ENCODE measurements at regions of chr2 and their contacts with region 1.

Region 1: DNA sequence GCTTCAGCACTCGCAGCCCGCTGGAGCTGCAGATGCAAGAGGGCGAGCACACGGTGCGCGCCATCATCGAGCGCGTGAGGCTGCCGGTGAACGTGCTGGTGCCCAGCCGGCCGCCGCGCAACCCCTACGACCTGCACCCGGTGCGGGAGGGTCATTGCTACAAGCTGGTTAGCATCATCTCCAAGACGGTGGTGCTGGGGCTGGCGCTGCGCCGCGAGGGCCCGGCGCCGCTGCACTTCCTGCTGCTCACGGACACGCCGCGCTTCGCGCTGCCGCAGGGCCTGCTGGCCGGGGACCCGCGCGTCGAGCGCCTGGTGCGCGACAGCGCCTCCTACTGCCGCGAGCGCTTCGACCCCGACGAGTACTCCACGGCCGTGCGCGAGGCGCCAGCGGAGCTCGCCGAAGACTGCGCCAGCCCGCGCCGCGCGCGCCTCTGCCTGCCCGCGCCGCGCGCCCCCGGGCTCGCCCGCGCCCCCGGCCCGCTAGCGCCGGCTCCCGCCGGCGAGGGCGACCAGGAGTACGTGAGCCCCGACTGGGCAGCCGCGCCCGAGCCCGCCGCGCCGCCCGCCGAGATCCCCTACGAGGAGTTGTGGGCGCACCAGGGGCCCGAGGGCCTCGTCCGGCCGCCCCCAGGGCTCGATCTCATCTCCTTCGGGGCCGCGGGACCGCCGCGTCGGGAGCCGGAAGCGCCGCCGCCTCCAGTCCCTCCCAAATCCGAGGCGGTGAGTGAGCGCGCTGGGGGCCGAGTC is 11.8 kb downstream of the GAREM2 start:
- DNase-seq: peak; percentile 76 to 95 (median 87)
- ATAC-seq: peak; percentile 98
- H3K4me3 ChIP-seq: peak overlapping the region; percentile 61 to 76
- H3K4me3 Mint-ChIP-seq: peak overlapping the region; percentile 88
- H3K27ac ChIP-seq: peak overlapping the region; percentile 39 to 50
- H3K27ac Mint-ChIP-seq: no peak overlapping the region
- H3K4me1 ChIP-seq: peaks cover 9% of the 10 kb centered on the region
- H3K4me1 Mint-ChIP-seq: peaks cover 23% of the 10 kb centered on the region
- H3K27me3 ChIP-seq: no peaks in the 10 kb centered on the region
- H3K27me3 Mint-ChIP-seq: peaks cover 11% of the 10 kb centered on the region
- CTCF ChIP-seq: peak; percentile 70

Region 2: GRCh38 chr2:24871852-24872323 is 1312.8 kb before region 1 on chr2:
- CTCF ChIA-PET with region 1: no interaction called
- POLR2A ChIA-PET with region 1: no interaction called
- intact Hi-C with region 1: no loop called
- DNase-seq: no peak
- ATAC-seq: no peak
- H3K4me3 ChIP-seq: no peak overlapping the region
- H3K4me3 Mint-ChIP-seq: no peak overlapping the region
- H3K27ac ChIP-seq: no peak overlapping the region
- H3K27ac Mint-ChIP-seq: no peak overlapping the region
- H3K4me1 ChIP-seq: no peaks in the 10 kb centered on the region
- H3K4me1 Mint-ChIP-seq: no peaks in the 10 kb centered on the region
- H3K27me3 ChIP-seq: no peaks in the 10 kb centered on the region
- H3K27me3 Mint-ChIP-seq: no peaks in the 10 kb centered on the region
- CTCF ChIP-seq: no peak

Region 3: DNA sequence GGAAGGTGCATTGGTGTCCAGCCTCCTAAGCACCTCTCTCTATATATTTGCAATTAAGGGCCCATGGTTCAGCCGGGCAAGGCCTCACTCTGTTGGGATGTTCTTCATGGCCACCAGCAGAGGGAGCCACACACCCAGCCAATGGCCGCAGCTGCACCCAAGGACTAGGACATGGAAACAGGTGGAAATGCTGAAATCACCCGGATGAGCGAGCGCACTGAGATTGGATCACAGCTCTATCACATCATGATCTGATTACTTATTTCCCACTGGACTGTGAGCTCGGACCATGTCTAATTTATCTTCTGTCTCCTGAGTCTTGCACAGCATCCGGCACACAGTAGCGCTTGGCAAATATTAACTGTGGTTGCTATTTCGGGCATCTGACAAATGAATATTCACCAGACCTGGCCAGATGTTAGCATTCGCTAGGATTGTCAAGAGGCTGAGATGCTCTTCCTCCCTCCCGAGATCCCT is 233.6 kb before region 1 on chr2:
- CTCF ChIA-PET with region 1: no interaction called
- POLR2A ChIA-PET with region 1: no interaction called
- intact Hi-C with region 1: loop called in 1 of 2 experiments (anchors 1 kb)
- DNase-seq: peak; percentile 42 to 84 (median 67)
- ATAC-seq: peak; percentile 96
- H3K4me3 ChIP-seq: no peak overlapping the region
- H3K4me3 Mint-ChIP-seq: no peak overlapping the region
- H3K27ac ChIP-seq: no peak overlapping the region
- H3K27ac Mint-ChIP-seq: no peak overlapping the region
- H3K4me1 ChIP-seq: no peaks in the 10 kb centered on the region
- H3K4me1 Mint-ChIP-seq: peaks cover 2% of the 10 kb centered on the region
- H3K27me3 ChIP-seq: no peaks in the 10 kb centered on the region
- H3K27me3 Mint-ChIP-seq: no peaks in the 10 kb centered on the region
- CTCF ChIP-seq: peak; percentile 89

Region 4: GRCh38 chr2:26033818-26034636 is 150.7 kb before region 1 on chr2 and contains the start of gene RAB10:
- CTCF ChIA-PET with region 1: no interaction called
- POLR2A ChIA-PET with region 1: interaction called, 7 read pairs
- intact Hi-C with region 1: loop called (anchors 1 kb)
- DNase-seq: peak; percentile 98 to 100 (median 99)
- ATAC-seq: peak; percentile 89
- H3K4me3 ChIP-seq: peak within 1 kb of the TSS; percentile 82 to 99
- H3K4me3 Mint-ChIP-seq: peak within 1 kb of the TSS; percentile 95
- H3K27ac ChIP-seq: peak within 1 kb of the TSS; percentile 92 to 93
- H3K27ac Mint-ChIP-seq: peak within 1 kb of the TSS; percentile 98
- H3K4me1 ChIP-seq: peaks cover 29% of the 10 kb centered on the region
- H3K4me1 Mint-ChIP-seq: peaks cover 40% of the 10 kb centered on the region
- H3K27me3 ChIP-seq: no peaks in the 10 kb centered on the region
- H3K27me3 Mint-ChIP-seq: no peaks in the 10 kb centered on the region
- CTCF ChIP-seq: no peak
- total RNA-seq, gene RAB10: 12.7 TPM

Region 5: GRCh38 chr2:26088032-26088643 is 96.6 kb before region 1 on chr2:
- CTCF ChIA-PET with region 1: interaction called, 10 read pairs
- POLR2A ChIA-PET with region 1: no interaction called
- intact Hi-C with region 1: loop called in 1 of 2 experiments (anchors 1 kb)
- DNase-seq: peak in 4 of 9 experiments; percentile 9 to 61 (median 32)
- ATAC-seq: peak; percentile 69
- H3K4me3 ChIP-seq: no peak overlapping the region
- H3K4me3 Mint-ChIP-seq: no peak overlapping the region
- H3K27ac ChIP-seq: no peak overlapping the region
- H3K27ac Mint-ChIP-seq: no peak overlapping the region
- H3K4me1 ChIP-seq: peaks cover 4% of the 10 kb centered on the region
- H3K4me1 Mint-ChIP-seq: peaks cover 61% of the 10 kb centered on the region
- H3K27me3 ChIP-seq: no peaks in the 10 kb centered on the region
- H3K27me3 Mint-ChIP-seq: no peaks in the 10 kb centered on the region
- CTCF ChIP-seq: peak; percentile 69

Region 6: DNA sequence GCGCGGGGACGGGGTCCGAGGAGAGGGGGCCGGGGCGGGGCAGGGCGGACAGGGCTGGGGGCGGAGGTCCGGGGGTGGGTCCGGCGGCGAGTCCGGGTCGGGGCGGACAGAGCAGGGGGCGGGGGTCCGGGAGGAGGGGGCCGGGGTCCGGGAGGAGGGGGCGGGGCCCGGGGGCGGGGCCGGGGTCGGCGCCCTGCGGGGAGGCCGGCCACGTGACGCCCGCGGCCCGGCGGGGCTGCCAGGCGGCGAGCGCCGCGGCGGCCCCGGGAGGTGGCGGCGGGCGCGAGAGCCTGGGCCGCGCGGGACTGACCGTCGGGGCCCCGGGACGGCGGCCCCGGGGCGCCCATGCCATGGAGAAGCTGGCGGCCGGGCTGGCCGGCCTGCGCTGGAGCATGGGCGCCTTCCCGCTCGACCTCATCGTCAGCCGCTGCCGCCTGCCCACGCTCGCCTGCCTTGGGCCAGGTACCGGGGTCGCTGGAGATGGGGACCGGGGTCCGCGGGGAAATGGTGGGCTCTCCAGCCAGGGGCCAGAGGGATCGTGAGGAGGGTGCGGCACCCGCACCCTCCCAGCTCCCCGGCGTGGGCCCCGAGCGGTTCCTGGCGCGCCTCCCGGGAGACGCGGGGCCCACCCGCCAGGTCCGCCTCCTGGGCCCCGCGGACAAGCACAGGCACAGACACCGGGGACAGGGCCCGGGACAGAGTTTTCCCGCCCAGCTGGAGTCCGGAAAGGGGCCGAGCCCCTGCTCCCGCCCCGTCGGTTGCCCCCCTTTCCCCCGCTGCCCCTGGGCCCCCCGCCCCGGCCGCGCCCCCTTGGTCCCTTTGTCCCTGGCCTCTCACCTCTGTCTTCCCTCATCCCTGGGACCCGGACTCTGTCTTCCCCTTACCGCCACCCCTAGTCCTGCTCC is 11.6 kb before region 1 on chr2 and contains the start of gene GAREM2:
- CTCF ChIA-PET with region 1: interaction called, 21 read pairs
- POLR2A ChIA-PET with region 1: interaction called, 8 read pairs
- intact Hi-C with region 1: no loop called
- DNase-seq: no peak
- ATAC-seq: peak; percentile 39
- H3K4me3 ChIP-seq: peak within 1 kb of the TSS in 1 of 2 experiments; percentile 37
- H3K4me3 Mint-ChIP-seq: peak within 1 kb of the TSS; percentile 78
- H3K27ac ChIP-seq: no peak within 1 kb of the TSS
- H3K27ac Mint-ChIP-seq: no peak within 1 kb of the TSS
- H3K4me1 ChIP-seq: peaks cover 5% of the 10 kb centered on the region
- H3K4me1 Mint-ChIP-seq: peaks cover 11% of the 10 kb centered on the region
- H3K27me3 ChIP-seq: peaks cover 6 to 18% of the 10 kb centered on the region in 2 experiments
- H3K27me3 Mint-ChIP-seq: peaks cover 26% of the 10 kb centered on the region
- CTCF ChIP-seq: no peak
- total RNA-seq, gene GAREM2: 2.5 to 4.8 TPM

Region 7: GRCh38 chr2:26244309-26245121 is 59.8 kb after region 1 on chr2 and contains the starts of genes HADHA and HADHB:
- CTCF ChIA-PET with region 1: interaction called, 8 read pairs
- POLR2A ChIA-PET with region 1: interaction called, 10 read pairs
- intact Hi-C with region 1: loop called (anchors 2 kb)
- DNase-seq: peak; percentile 72 to 91 (median 84)
- ATAC-seq: peak; percentile 82
- H3K4me3 ChIP-seq: peak within 1 kb of the TSS; percentile 99
- H3K4me3 Mint-ChIP-seq: peak within 1 kb of the TSS; percentile 99
- H3K27ac ChIP-seq: peak within 1 kb of the TSS; percentile 99
- H3K27ac Mint-ChIP-seq: peak within 1 kb of the TSS; percentile 100
- H3K4me1 ChIP-seq: peaks cover 22% of the 10 kb centered on the region
- H3K4me1 Mint-ChIP-seq: peaks cover 60% of the 10 kb centered on the region
- H3K27me3 ChIP-seq: no peaks in the 10 kb centered on the region
- H3K27me3 Mint-ChIP-seq: no peaks in the 10 kb centered on the region
- CTCF ChIP-seq: no peak
- total RNA-seq, gene HADHA: 66.8 to 69.4 TPM
- total RNA-seq, gene HADHB: 26.0 to 26.1 TPM